Left ventricle myocardium inferior (tissue), 1 donor: ENCODE measurements at regions of chr1 and their contacts with region 1.

Region 1: GRCh38 chr1:7667625-7668218 is 103.4 kb upstream of the VAMP3 start:
- DNase-seq: peak; percentile 90
- H3K4me3 ChIP-seq: no peak overlapping the region
- H3K27ac ChIP-seq: no peak overlapping the region
- H3K4me1 ChIP-seq: peaks cover 21% of the 10 kb centered on the region
- H3K27me3 ChIP-seq: peaks cover 7% of the 10 kb centered on the region
- CTCF ChIP-seq: peak; percentile 100

Region 2: GRCh38 chr1:7752512-7753417 is 85.0 kb after region 1 on chr1:
- intact Hi-C with region 1: loop called (anchors 2 kb)
- DNase-seq: peak; percentile 37
- H3K4me3 ChIP-seq: peak overlapping the region; percentile 32
- H3K27ac ChIP-seq: no peak overlapping the region
- H3K4me1 ChIP-seq: peaks cover 9% of the 10 kb centered on the region
- H3K27me3 ChIP-seq: no peaks in the 10 kb centered on the region
- CTCF ChIP-seq: peak; percentile 86